ENCODE measurements at regions of chr1 and their contacts with region 1.

Region 1: GRCh38 chr1:19493547-19493946 is 8.2 kb upstream of the CAPZB start:
- DNase-seq: no peak
- ATAC-seq: no peak
- H3K4me3 ChIP-seq: no peak overlapping the region
- H3K27ac ChIP-seq: no peak overlapping the region
- H3K4me1 ChIP-seq: no peaks in the 10 kb centered on the region
- H3K27me3 ChIP-seq: no peaks in the 10 kb centered on the region; a peak in 1 of 5 replicates
- CTCF ChIP-seq: no peak
- EP300 ChIP-seq: no peak
- POLR2A ChIP-seq: no peak
- RAD21 ChIP-seq: no peak

Region 2: DNA sequence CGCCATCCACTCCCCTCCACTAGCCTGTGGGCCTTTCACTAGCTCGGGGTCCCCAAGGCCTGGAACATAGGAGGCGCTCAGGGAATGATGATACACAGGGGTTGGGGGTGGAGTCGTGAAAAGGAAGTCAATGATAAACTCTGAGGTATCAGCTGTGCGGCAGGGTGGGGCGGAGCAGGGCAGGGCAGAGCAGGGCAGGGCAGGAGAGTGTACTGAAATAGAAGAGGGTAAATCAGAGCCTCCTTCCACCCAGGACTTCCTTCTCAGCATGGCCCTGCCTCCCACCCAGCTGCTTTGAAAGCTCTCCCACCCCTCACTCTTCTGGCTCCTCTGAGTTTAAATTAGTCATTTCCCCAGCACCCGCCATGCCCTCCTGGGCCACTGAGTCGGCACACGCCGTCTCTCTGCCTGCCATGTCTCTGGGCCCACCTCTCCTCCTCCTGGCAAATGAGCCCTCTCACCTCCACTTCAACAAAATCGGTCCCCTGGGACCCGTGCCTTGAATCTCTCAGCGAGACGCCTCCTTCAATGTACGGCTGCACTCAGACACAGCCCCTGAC is 25.1 kb before region 1 on chr1:
- CTCF ChIA-PET with region 1: no interaction called
- POLR2A ChIA-PET with region 1: no interaction called
- in situ Hi-C with region 1: no loop called
- intact Hi-C with region 1: no loop called
- DNase-seq: peak; percentile 70 to 87 (median 76)
- ATAC-seq: peak; percentile 90
- H3K4me3 ChIP-seq: no peak overlapping the region; the same call in 1 of the 2 replicates
- H3K27ac ChIP-seq: peak overlapping the region; percentile 75
- H3K4me1 ChIP-seq: peaks cover 17 to 45% of the 10 kb centered on the region in 2 experiments
- H3K27me3 ChIP-seq: no peaks in the 10 kb centered on the region
- CTCF ChIP-seq: peak in 2 of 3 experiments; percentile 41 to 49; a peak in 4 of 6 replicates
- EP300 ChIP-seq: peak; percentile 10; the same call in 1 of the 2 replicates
- POLR2A ChIP-seq: no peak
- RAD21 ChIP-seq: peak; percentile 42 to 58

Region 3: GRCh38 chr1:19504796-19505692 is 11.5 kb after region 1 on chr1:
- CTCF ChIA-PET with region 1: no interaction called
- POLR2A ChIA-PET with region 1: interaction called, 17 read pairs
- in situ Hi-C with region 1: no loop called
- intact Hi-C with region 1: no loop called
- DNase-seq: no peak
- ATAC-seq: no peak
- H3K4me3 ChIP-seq: no peak overlapping the region
- H3K27ac ChIP-seq: no peak overlapping the region
- H3K4me1 ChIP-seq: peaks cover 4 to 33% of the 10 kb centered on the region in 2 experiments; a peak in 4 of 5 replicates
- H3K27me3 ChIP-seq: no peaks in the 10 kb centered on the region
- CTCF ChIP-seq: no peak
- EP300 ChIP-seq: no peak
- POLR2A ChIP-seq: no peak
- RAD21 ChIP-seq: no peak

Region 4: GRCh38 chr1:19563324-19564097 is 70.0 kb after region 1 on chr1:
- CTCF ChIA-PET with region 1: no interaction called
- POLR2A ChIA-PET with region 1: no interaction called
- in situ Hi-C with region 1: no loop called
- intact Hi-C with region 1: no loop called
- DNase-seq: peak in 1 of 4 experiments; percentile 9
- ATAC-seq: peak; percentile 34; the same call in 1 of the 3 replicates
- H3K4me3 ChIP-seq: no peak overlapping the region
- H3K27ac ChIP-seq: no peak overlapping the region
- H3K4me1 ChIP-seq: peaks cover 0 to 4% of the 10 kb centered on the region in 2 experiments; a peak in 2 of 5 replicates
- H3K27me3 ChIP-seq: peaks cover 18 to 26% of the 10 kb centered on the region in 2 experiments
- CTCF ChIP-seq: no peak
- EP300 ChIP-seq: no peak
- POLR2A ChIP-seq: no peak
- RAD21 ChIP-seq: no peak

Region 5: DNA sequence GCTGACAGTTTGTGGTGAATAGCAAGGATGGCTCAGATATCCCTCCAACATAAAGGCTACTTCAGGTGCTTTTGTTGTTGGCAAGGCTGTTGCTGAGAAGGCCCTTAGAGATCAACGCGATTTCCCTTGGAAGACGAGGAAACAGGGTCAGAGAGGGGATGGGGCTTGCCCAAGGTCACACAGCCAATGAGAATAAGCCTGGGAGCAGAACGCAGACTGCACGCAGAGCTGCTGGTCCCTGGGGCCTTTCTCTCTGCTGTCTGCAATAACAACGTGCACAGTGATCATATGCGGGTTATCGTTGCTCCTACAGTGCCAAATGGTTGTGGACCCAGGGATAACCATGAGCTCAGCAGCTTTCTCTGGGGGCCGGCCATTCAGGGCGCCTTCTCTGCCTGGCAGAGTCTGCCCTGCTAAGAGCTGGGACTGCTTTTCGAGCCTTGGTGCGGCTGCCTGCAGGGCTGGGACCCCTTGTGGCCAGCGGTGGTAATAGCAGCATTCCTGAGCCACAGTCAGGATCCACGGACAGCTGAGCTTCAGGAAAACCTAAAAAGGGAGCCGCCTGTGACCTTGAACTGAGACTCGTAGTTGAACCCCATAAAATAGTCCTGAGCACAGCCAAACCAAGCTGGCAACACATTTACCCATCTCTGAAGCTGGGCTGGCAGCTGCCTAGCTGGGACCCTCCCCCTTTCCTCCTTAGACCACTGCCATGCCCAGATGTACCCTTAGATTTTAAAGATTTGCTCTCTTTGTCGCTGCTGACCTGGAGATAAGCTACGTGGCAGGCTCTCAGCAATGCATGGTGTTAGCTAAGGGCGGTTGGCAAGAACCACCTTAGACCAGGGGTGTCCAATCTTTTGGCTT is 210.9 kb after region 1 on chr1:
- CTCF ChIA-PET with region 1: no interaction called
- POLR2A ChIA-PET with region 1: no interaction called
- in situ Hi-C with region 1: no loop called
- intact Hi-C with region 1: no loop called
- DNase-seq: peak; percentile 69 to 86 (median 84)
- ATAC-seq: peak; percentile 97
- H3K4me3 ChIP-seq: no peak overlapping the region
- H3K27ac ChIP-seq: no peak overlapping the region
- H3K4me1 ChIP-seq: no peaks in the 10 kb centered on the region
- H3K27me3 ChIP-seq: peaks cover 17 to 53% of the 10 kb centered on the region in 2 experiments
- CTCF ChIP-seq: peak; percentile 89 to 96 (median 91)
- EP300 ChIP-seq: no peak
- POLR2A ChIP-seq: no peak
- RAD21 ChIP-seq: peak in 1 of 2 experiments; percentile 72; a peak in 2 of 4 replicates

Measured in K562 (cell line).